AG04450 (cell line): ENCODE measurements at regions of chr5 and their contacts with region 1.

Region 1: GRCh38 chr5:147188200-147189108 is 46.4 kb upstream of the STK32A start:
- DNase-seq: peak; percentile 38
- H3K4me3 ChIP-seq: no peak overlapping the region
- H3K27ac ChIP-seq: no peak overlapping the region
- H3K27me3 ChIP-seq: no peaks in the 10 kb centered on the region
- CTCF ChIP-seq: peak; percentile 85

Region 2: GRCh38 chr5:146541958-146542849 is 646.2 kb before region 1 on chr5:
- CTCF ChIA-PET with region 1: interaction called, 32 read pairs
- POLR2A ChIA-PET with region 1: no interaction called
- DNase-seq: peak; percentile 18
- H3K4me3 ChIP-seq: no peak overlapping the region
- H3K27ac ChIP-seq: no peak overlapping the region
- H3K27me3 ChIP-seq: no peaks in the 10 kb centered on the region
- CTCF ChIP-seq: peak; percentile 85

Region 3: GRCh38 chr5:147098233-147098790 is 90.1 kb before region 1 on chr5:
- CTCF ChIA-PET with region 1: interaction called, 70 read pairs
- POLR2A ChIA-PET with region 1: no interaction called
- DNase-seq: no peak
- H3K4me3 ChIP-seq: no peak overlapping the region
- H3K27ac ChIP-seq: no peak overlapping the region
- H3K27me3 ChIP-seq: no peaks in the 10 kb centered on the region
- CTCF ChIP-seq: peak; percentile 57

Region 4: DNA sequence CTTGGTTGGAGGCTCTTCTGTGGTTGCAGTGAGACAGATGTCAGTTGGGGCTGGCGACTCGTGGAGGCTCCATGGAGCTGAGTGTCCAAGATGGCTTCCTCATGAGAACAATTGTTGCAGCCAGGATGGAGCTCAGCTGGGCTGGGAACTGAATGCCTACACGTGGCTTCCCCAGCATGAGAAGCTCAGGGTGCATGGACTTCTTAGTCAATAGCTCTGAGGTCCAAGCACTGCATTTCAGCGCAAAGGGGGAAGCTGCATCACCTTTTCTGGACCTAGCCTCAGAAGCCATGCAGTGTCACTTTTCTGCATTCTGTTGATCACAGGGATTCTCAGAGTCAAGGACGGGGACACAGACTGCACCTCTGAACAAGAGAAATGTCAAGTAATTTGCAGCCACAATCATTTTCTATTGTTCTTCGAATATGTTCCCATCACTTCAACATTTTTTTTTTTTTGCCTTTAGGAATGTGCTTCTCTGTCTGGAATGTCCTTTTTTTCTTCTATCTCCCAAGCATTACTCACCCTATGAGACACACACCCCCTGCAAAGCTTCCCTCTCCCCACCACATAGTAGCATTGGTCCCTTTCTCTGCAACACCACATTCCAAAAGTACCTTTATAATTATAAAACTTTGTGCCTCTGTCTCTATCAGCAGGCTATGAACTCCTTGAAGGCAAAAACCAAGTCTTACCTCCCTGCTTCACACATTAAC is 11.2 kb before region 1 on chr5:
- CTCF ChIA-PET with region 1: interaction called, 51 read pairs
- POLR2A ChIA-PET with region 1: no interaction called
- DNase-seq: no peak
- H3K4me3 ChIP-seq: no peak overlapping the region
- H3K27ac ChIP-seq: no peak overlapping the region
- H3K27me3 ChIP-seq: no peaks in the 10 kb centered on the region
- CTCF ChIP-seq: no peak

Region 5: GRCh38 chr5:147216552-147217154 is 28.2 kb after region 1 on chr5:
- CTCF ChIA-PET with region 1: interaction called, 16 read pairs
- POLR2A ChIA-PET with region 1: no interaction called
- DNase-seq: no peak
- H3K4me3 ChIP-seq: no peak overlapping the region
- H3K27ac ChIP-seq: no peak overlapping the region
- H3K27me3 ChIP-seq: no peaks in the 10 kb centered on the region
- CTCF ChIP-seq: no peak

Region 6: DNA sequence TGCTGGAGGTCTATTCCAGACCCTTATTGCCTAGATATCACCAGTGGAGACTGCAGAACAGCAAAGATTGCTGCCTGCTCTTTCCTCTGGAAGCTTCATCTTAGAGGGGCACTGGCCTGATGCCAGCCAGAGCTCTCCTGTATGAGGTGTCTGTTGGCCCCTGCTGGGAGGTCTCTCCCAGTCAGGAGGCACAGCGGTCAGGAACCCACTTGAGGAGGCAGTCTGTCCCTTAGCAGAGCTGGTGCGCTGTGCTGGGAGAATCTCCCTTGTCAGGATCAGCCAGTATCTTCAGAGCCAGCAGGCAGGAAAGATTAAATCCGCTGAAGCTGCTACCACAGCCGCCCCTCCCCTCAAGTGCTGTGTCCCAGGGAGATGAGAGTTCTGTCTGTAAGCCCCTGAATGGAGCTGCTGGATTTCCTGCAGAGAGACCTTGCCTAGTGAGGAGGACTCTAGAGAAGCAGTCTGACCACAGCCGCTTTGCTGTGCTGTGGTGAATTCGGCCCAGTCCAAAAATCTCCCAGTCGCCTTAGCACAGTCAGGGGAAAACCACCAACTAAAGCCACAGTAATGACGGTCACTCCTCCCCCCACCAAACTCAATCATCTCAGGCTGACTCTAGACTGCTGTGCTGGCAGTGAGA is 470.0 kb after region 1 on chr5:
- CTCF ChIA-PET with region 1: no interaction called
- POLR2A ChIA-PET with region 1: no interaction called
- DNase-seq: no peak
- H3K4me3 ChIP-seq: no peak overlapping the region
- H3K27ac ChIP-seq: no peak overlapping the region
- H3K27me3 ChIP-seq: no peaks in the 10 kb centered on the region
- CTCF ChIP-seq: no peak